Activated naive CD4-positive, alpha-beta T cell treated with anti-CD3 and anti-CD28 coated beads for 36 hours (primary cell): ENCODE measurements at regions of chr6 and their contacts with region 1.

Region 1: GRCh38 chr6:135423649-135424128 is 73.9 kb downstream of the AHI1 start:
- DNase-seq: no peak
- H3K4me3 Mint-ChIP-seq: no peak overlapping the region
- H3K27ac Mint-ChIP-seq: no peak overlapping the region
- H3K4me1 Mint-ChIP-seq: no peaks in the 10 kb centered on the region
- H3K27me3 Mint-ChIP-seq: no peaks in the 10 kb centered on the region

Region 2: GRCh38 chr6:134152767-134153485 is 1270.8 kb before region 1 on chr6:
- CTCF ChIA-PET with region 1: no interaction called
- intact Hi-C with region 1: loop called (anchors 10 kb)
- DNase-seq: no peak
- H3K4me3 Mint-ChIP-seq: no peak overlapping the region
- H3K27ac Mint-ChIP-seq: no peak overlapping the region
- H3K4me1 Mint-ChIP-seq: no peaks in the 10 kb centered on the region
- H3K27me3 Mint-ChIP-seq: no peaks in the 10 kb centered on the region

Region 3: GRCh38 chr6:135002229-135002844 is 421.4 kb before region 1 on chr6:
- CTCF ChIA-PET with region 1: no interaction called
- intact Hi-C with region 1: loop called (anchors 5 kb)
- DNase-seq: no peak
- H3K4me3 Mint-ChIP-seq: no peak overlapping the region
- H3K27ac Mint-ChIP-seq: no peak overlapping the region
- H3K4me1 Mint-ChIP-seq: peaks cover 19% of the 10 kb centered on the region
- H3K27me3 Mint-ChIP-seq: no peaks in the 10 kb centered on the region

Region 4: GRCh38 chr6:135145063-135145800 is 278.5 kb before region 1 on chr6:
- CTCF ChIA-PET with region 1: interaction called, 6 read pairs
- intact Hi-C with region 1: loop called (anchors 1 kb)
- DNase-seq: no peak
- H3K4me3 Mint-ChIP-seq: no peak overlapping the region
- H3K27ac Mint-ChIP-seq: peak overlapping the region; percentile 76
- H3K4me1 Mint-ChIP-seq: peaks cover 51% of the 10 kb centered on the region
- H3K27me3 Mint-ChIP-seq: no peaks in the 10 kb centered on the region

Region 5: GRCh38 chr6:135195522-135195921 is 228.2 kb before region 1 on chr6:
- CTCF ChIA-PET with region 1: no interaction called
- intact Hi-C with region 1: loop called (anchors 5 kb)
- DNase-seq: no peak
- H3K4me3 Mint-ChIP-seq: no peak overlapping the region
- H3K27ac Mint-ChIP-seq: no peak overlapping the region
- H3K4me1 Mint-ChIP-seq: peaks cover 19% of the 10 kb centered on the region
- H3K27me3 Mint-ChIP-seq: no peaks in the 10 kb centered on the region

Region 6: GRCh38 chr6:135458051-135458450 is 34.4 kb after region 1 on chr6:
- CTCF ChIA-PET with region 1: no interaction called
- intact Hi-C with region 1: no loop called
- DNase-seq: no peak
- H3K4me3 Mint-ChIP-seq: no peak overlapping the region
- H3K27ac Mint-ChIP-seq: no peak overlapping the region
- H3K4me1 Mint-ChIP-seq: no peaks in the 10 kb centered on the region
- H3K27me3 Mint-ChIP-seq: no peaks in the 10 kb centered on the region

Region 7: GRCh38 chr6:136403166-136403980 is 979.7 kb after region 1 on chr6:
- CTCF ChIA-PET with region 1: no interaction called
- intact Hi-C with region 1: no loop called
- DNase-seq: no peak
- H3K4me3 Mint-ChIP-seq: no peak overlapping the region
- H3K27ac Mint-ChIP-seq: no peak overlapping the region
- H3K4me1 Mint-ChIP-seq: no peaks in the 10 kb centered on the region
- H3K27me3 Mint-ChIP-seq: peaks cover 4% of the 10 kb centered on the region